Ovary (tissue), 10 donors: ENCODE measurements at regions of chr2 and their contacts with region 1.

Region 1: DNA sequence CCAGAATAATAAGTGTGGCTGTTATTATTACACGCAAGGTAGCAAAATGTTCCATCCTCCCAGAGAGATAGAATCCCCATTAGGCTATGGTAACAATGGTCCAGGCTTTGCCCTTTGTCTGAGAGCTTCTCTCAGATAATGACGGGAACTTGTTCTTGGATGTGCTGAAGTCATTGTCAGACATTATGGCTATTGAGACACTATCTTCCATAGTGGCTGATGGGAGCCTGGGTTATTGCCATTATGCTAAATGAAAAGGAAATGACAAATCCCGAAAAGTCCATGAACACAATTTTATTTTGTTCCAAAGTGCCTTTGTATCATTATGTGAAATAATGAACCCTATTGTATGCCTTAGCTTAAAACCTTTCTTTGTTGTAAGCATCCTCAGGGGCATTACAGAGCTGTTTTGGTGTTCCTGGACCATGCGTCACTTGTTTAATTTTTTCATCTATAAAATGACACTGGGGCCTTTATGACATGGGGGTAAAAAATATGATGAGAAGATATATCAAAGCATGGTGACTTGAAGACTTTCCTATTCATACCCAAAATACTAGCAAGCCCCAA is 218.5 kb downstream of the KCNS3 start:
- DNase-seq: no peak
- H3K4me3 ChIP-seq: no peak overlapping the region
- H3K27ac ChIP-seq: no peak overlapping the region
- H3K4me1 ChIP-seq: no peaks in the 10 kb centered on the region
- H3K27me3 ChIP-seq: no peaks in the 10 kb centered on the region
- CTCF ChIP-seq: no peak
- EP300 ChIP-seq: no peak
- POLR2A ChIP-seq: no peak

Region 2: GRCh38 chr2:17416884-17417391 is 680.0 kb before region 1 on chr2:
- intact Hi-C with region 1: loop called in 1 of 4 experiments (anchors 10 kb)
- DNase-seq: no peak
- H3K4me3 ChIP-seq: no peak overlapping the region
- H3K27ac ChIP-seq: no peak overlapping the region
- H3K4me1 ChIP-seq: no peaks in the 10 kb centered on the region
- H3K27me3 ChIP-seq: no peaks in the 10 kb centered on the region
- CTCF ChIP-seq: no peak
- EP300 ChIP-seq: no peak
- POLR2A ChIP-seq: no peak

Region 3: GRCh38 chr2:18690342-18690741 is 593.4 kb after region 1 on chr2:
- intact Hi-C with region 1: no loop called
- DNase-seq: no peak
- H3K4me3 ChIP-seq: no peak overlapping the region
- H3K27ac ChIP-seq: no peak overlapping the region
- H3K4me1 ChIP-seq: no peaks in the 10 kb centered on the region
- H3K27me3 ChIP-seq: no peaks in the 10 kb centered on the region
- CTCF ChIP-seq: no peak
- EP300 ChIP-seq: no peak
- POLR2A ChIP-seq: no peak